ENCODE measurements at regions of chr2 and their contacts with region 1.

Region 1: GRCh38 chr2:147989809-147990403 is 30.6 kb downstream of the ORC4 start:
- DNase-seq: peak in 7 of 9 donors; percentile 37 to 70 (median 52)
- ATAC-seq: peak; percentile 87
- H3K4me3 ChIP-seq: no peak overlapping the region
- H3K4me3 Mint-ChIP-seq: no peak overlapping the region
- H3K27ac ChIP-seq: no peak overlapping the region
- H3K27ac Mint-ChIP-seq: peak overlapping the region in 7 of 9 donors; percentile 11 to 84 (median 28)
- H3K4me1 ChIP-seq: no peaks in the 10 kb centered on the region
- H3K4me1 Mint-ChIP-seq: peaks cover 6 to 50% (median 42%) of the 10 kb centered on the region in 7 donors
- H3K27me3 ChIP-seq: no peaks in the 10 kb centered on the region
- H3K27me3 Mint-ChIP-seq: no peaks in the 10 kb centered on the region

Region 2: GRCh38 chr2:147567136-147567535 is 422.8 kb before region 1 on chr2:
- CTCF ChIA-PET with region 1: no interaction called
- POLR2A ChIA-PET with region 1: no interaction called
- intact Hi-C with region 1: no loop called
- DNase-seq: no peak
- ATAC-seq: no peak
- H3K4me3 ChIP-seq: no peak overlapping the region
- H3K4me3 Mint-ChIP-seq: no peak overlapping the region
- H3K27ac ChIP-seq: no peak overlapping the region
- H3K27ac Mint-ChIP-seq: no peak overlapping the region
- H3K4me1 ChIP-seq: no peaks in the 10 kb centered on the region
- H3K4me1 Mint-ChIP-seq: no peaks in the 10 kb centered on the region
- H3K27me3 ChIP-seq: no peaks in the 10 kb centered on the region
- H3K27me3 Mint-ChIP-seq: no peaks in the 10 kb centered on the region

Region 3: GRCh38 chr2:147937744-147938349 is 52.1 kb before region 1 on chr2:
- CTCF ChIA-PET with region 1: no interaction called
- POLR2A ChIA-PET with region 1: no interaction called
- intact Hi-C with region 1: loop called in 1 of 2 experiments (anchors 1 kb)
- DNase-seq: peak in 5 of 9 donors; percentile 25 to 40 (median 34)
- ATAC-seq: peak; percentile 79
- H3K4me3 ChIP-seq: no peak overlapping the region
- H3K4me3 Mint-ChIP-seq: no peak overlapping the region
- H3K27ac ChIP-seq: no peak overlapping the region
- H3K27ac Mint-ChIP-seq: peak overlapping the region in 4 of 9 donors; percentile 26 to 75 (median 42)
- H3K4me1 ChIP-seq: no peaks in the 10 kb centered on the region
- H3K4me1 Mint-ChIP-seq: peaks cover 0 to 2% (median 0%) of the 10 kb centered on the region in 7 donors
- H3K27me3 ChIP-seq: no peaks in the 10 kb centered on the region
- H3K27me3 Mint-ChIP-seq: no peaks in the 10 kb centered on the region

Region 4: DNA sequence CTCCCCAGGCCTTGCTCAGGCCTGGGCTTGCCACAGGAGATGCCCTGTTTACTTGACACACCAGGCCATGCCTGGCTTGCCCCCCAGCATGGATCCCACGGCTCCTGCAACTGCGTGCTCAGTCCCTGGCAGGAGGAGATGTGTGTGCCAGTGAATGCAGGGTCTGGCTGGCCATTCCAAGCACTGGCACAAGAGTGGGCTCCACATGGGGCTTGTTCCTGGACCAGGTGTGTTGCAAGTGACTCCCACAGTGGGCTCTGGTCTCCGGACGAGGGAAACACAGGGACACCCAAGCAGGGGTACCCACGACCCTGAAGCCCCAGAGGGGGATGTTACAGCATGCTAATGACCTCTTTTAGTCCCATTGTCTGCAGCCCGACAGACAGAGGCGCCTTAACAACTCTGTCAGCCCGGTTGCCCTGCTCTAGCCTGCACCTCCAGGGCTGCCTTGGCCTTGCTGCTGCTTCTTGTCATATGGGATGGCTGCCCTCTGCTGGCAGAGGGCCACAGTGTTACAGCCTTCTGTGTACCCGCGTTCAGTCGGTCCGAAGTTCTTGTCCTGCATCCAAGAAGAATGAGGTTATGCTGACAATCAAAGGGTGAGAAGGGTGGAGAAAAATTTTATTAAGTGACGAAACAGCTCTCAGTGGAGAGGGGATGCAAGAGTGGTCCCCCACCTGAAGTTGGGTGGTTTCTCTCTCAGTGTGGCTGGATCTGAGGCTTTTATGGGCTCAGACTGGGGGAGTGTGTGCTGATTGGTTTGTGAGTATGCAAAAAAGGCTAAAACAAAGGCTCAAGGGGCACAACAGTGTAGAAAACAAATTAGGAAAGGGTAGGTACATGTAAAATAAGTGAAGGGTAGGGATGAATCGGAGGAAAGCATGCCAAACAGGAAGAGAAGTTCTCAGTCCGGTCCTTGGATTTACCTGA is 211.4 kb after region 1 on chr2:
- CTCF ChIA-PET with region 1: interaction called, 5 read pairs
- POLR2A ChIA-PET with region 1: no interaction called
- intact Hi-C with region 1: loop called in 1 of 2 experiments (anchors 1 kb)
- DNase-seq: peak in 8 of 9 donors; percentile 2 to 41 (median 24)
- ATAC-seq: peak; percentile 61
- H3K4me3 ChIP-seq: no peak overlapping the region
- H3K4me3 Mint-ChIP-seq: no peak overlapping the region
- H3K27ac ChIP-seq: no peak overlapping the region
- H3K27ac Mint-ChIP-seq: no peak overlapping the region
- H3K4me1 ChIP-seq: no peaks in the 10 kb centered on the region
- H3K4me1 Mint-ChIP-seq: peaks cover 0 to 7% (median 0%) of the 10 kb centered on the region in 7 donors
- H3K27me3 ChIP-seq: no peaks in the 10 kb centered on the region
- H3K27me3 Mint-ChIP-seq: no peaks in the 10 kb centered on the region

Region 5: GRCh38 chr2:148509288-148509902 is 519.5 kb after region 1 on chr2:
- CTCF ChIA-PET with region 1: interaction called, 53 read pairs
- POLR2A ChIA-PET with region 1: interaction called, 4 read pairs
- intact Hi-C with region 1: loop called (anchors 1 kb)
- DNase-seq: peak; percentile 54 to 86 (median 78)
- ATAC-seq: peak; percentile 100
- H3K4me3 ChIP-seq: peak overlapping the region; percentile 51
- H3K4me3 Mint-ChIP-seq: peak overlapping the region; percentile 65 to 91 (median 84)
- H3K27ac ChIP-seq: peak overlapping the region; percentile 37
- H3K27ac Mint-ChIP-seq: peak overlapping the region; percentile 13 to 90 (median 88)
- H3K4me1 ChIP-seq: no peaks in the 10 kb centered on the region
- H3K4me1 Mint-ChIP-seq: peaks cover 3 to 29% (median 16%) of the 10 kb centered on the region in 7 donors
- H3K27me3 ChIP-seq: no peaks in the 10 kb centered on the region
- H3K27me3 Mint-ChIP-seq: no peaks in the 10 kb centered on the region

Region 6: DNA sequence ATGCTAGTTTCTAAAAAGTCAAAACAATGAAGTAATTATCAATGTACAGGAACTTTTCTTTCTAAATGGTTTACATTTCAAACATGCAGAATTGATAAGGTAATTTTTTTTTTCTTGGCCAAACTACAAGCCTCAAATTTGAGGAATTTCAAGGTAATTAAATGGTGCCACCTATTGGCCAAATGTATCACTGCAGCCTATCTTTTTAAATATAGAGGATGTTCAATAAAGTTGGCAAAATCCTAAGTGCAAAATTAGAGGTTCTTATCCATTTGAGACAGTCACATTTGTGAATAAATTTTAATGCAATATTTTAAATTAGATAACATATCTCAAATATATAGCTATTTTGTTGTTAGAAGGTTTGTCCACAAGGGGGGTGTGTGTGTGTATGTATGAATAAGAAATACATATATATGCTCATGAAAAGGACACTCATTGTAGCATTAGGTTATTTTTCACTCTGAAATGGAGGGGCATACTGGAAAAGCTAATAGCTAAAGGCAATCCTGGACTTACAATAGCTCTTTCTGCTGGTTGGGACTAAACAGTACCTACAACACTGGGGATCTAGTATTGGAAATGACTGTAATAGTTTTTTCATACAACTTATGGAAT is 1571.5 kb after region 1 on chr2:
- CTCF ChIA-PET with region 1: no interaction called
- POLR2A ChIA-PET with region 1: interaction called, 4 read pairs
- intact Hi-C with region 1: loop called in 1 of 2 experiments (anchors 5 kb)
- DNase-seq: peak in 6 of 9 donors; percentile 3 to 53 (median 43)
- ATAC-seq: peak; percentile 47
- H3K4me3 ChIP-seq: no peak overlapping the region
- H3K4me3 Mint-ChIP-seq: no peak overlapping the region
- H3K27ac ChIP-seq: no peak overlapping the region
- H3K27ac Mint-ChIP-seq: no peak overlapping the region
- H3K4me1 ChIP-seq: no peaks in the 10 kb centered on the region
- H3K4me1 Mint-ChIP-seq: peaks cover 0 to 5% (median 0%) of the 10 kb centered on the region in 7 donors
- H3K27me3 ChIP-seq: no peaks in the 10 kb centered on the region
- H3K27me3 Mint-ChIP-seq: peaks cover 0 to 8% (median 7%) of the 10 kb centered on the region in 5 donors